ENCODE measurements at regions of chr20 and their contacts with region 1.

Region 1: DNA sequence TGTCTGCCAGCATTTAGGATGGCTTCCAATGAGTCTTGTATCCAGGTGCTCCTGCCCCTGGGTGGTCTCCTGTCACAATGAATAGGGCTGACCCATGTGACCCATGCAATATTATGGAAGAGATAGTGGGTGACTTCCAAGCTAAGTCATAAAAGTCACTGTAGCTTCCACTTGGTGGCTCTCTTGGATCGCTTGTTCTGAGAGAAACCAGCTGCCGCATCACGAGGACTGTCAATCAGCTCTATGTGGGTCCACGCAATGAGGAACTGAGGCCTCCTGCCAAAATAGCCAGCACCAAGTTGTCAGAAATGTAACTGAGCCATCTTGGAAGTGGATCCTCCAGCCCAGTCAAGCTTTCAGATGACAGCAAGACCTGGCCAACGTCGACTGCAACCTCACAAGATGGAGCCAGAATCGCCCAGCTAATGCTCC is 14.9 kb upstream of the MATN4 start:
- DNase-seq: peak; percentile 54
- H3K4me3 Mint-ChIP-seq: no peak overlapping the region
- H3K27ac Mint-ChIP-seq: no peak overlapping the region
- H3K4me1 Mint-ChIP-seq: peaks cover 26% of the 10 kb centered on the region
- H3K27me3 Mint-ChIP-seq: no peaks in the 10 kb centered on the region

Region 2: GRCh38 chr20:44966030-44966961 is 356.7 kb before region 1 on chr20 and contains the start of gene STK4:
- CTCF ChIA-PET with region 1: no interaction called
- intact Hi-C with region 1: no loop called
- DNase-seq: peak; percentile 96
- H3K4me3 Mint-ChIP-seq: peak within 1 kb of the TSS; percentile 88
- H3K27ac Mint-ChIP-seq: peak within 1 kb of the TSS; percentile 98
- H3K4me1 Mint-ChIP-seq: peaks cover 56% of the 10 kb centered on the region
- H3K27me3 Mint-ChIP-seq: no peaks in the 10 kb centered on the region
- total RNA-seq, gene STK4: 110 to 116 TPM

Region 3: DNA sequence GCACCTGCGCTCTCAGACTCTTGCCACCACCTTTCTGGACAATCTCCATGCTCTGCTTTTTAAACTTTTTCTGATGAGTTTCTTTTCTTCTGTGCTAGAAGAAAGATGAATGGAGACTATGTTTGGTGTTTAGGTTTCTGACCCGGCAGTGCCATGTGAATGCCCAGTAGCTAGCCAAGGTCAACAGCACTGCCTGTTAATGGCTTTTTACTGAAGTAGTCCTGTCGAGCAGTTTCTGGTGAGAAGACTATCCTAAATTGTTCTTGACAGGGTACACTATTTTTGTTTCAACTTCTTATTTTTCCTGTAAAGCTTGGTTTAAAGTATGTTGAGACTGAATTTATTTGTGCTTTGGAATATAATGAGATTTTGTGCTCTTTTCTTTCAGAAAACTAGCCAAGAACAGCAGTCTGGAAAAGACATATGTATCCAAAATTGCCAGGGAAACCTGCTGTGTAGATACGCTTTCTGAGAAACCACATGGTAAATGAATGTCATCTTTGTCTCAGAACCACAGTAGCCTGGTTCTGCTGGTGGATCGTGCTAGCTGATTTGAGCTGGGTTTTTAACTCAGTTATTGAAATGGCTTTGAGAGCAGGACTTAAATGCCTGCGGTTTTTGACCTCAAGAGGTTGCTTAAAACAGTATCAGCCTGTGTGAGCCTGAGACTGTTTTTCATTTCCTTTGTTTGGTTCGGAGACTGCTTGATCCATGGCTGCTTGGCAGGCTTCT is 270.1 kb before region 1 on chr20:
- CTCF ChIA-PET with region 1: no interaction called
- intact Hi-C with region 1: no loop called
- DNase-seq: peak; percentile 20
- H3K4me3 Mint-ChIP-seq: no peak overlapping the region
- H3K27ac Mint-ChIP-seq: peak overlapping the region; percentile 80
- H3K4me1 Mint-ChIP-seq: peaks cover 80% of the 10 kb centered on the region
- H3K27me3 Mint-ChIP-seq: no peaks in the 10 kb centered on the region

Region 4: GRCh38 chr20:45347936-45348778 is 25.2 kb after region 1 on chr20 and contains the start of gene SDC4:
- CTCF ChIA-PET with region 1: interaction called, 20 read pairs
- intact Hi-C with region 1: no loop called
- DNase-seq: peak; percentile 68
- H3K4me3 Mint-ChIP-seq: peak within 1 kb of the TSS; percentile 80
- H3K27ac Mint-ChIP-seq: peak within 1 kb of the TSS; percentile 77
- H3K4me1 Mint-ChIP-seq: peaks cover 38% of the 10 kb centered on the region
- H3K27me3 Mint-ChIP-seq: no peaks in the 10 kb centered on the region
- total RNA-seq, gene SDC4: 28.4 to 31.4 TPM

Region 5: DNA sequence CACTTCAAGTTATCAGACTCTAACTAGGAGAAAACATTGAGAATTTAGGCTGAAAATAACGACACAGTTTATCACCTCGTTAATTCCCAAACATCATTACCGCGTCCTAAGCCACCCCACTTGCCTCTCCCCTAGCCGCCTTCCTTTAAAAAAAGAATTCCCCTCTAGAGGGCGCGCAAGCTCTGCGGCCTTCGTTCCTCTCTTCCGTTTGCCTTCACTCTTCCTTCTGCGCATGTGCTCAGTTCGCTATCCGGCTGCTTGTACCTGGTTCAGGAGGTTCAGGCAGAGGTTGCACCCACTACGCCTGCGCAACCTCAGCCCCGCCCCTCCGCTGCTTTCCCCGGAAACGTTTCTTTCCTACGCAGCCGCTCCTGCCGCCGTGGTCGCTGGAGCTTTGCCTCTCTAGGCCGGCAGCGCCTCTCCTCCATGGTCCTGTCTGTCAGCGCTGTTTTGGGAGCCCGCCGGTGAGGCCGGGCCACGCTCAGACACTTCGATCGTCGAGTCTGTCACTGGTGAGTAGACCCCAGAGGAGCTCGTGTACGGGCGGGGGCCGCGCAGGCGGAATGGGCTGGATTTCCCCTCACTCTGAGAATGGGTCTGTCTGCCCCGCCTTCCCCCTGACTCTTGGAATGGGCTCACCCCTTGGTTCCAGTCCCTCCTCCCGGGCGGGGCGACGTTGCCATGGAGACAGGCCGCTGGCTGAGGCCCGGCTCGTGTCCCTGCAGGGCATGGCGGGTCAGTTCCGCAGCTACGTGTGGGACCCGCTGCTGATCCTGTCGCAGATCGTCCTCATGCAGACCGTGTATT is 40.0 kb after region 1 on chr20 and contains the start of gene SYS1:
- CTCF ChIA-PET with region 1: interaction called, 35 read pairs
- intact Hi-C with region 1: loop called (anchors 2 kb)
- DNase-seq: peak; percentile 99
- H3K4me3 Mint-ChIP-seq: peak within 1 kb of the TSS; percentile 96
- H3K27ac Mint-ChIP-seq: peak within 1 kb of the TSS; percentile 97
- H3K4me1 Mint-ChIP-seq: peaks cover 47% of the 10 kb centered on the region
- H3K27me3 Mint-ChIP-seq: no peaks in the 10 kb centered on the region
- total RNA-seq, gene SYS1: 24.0 to 26.0 TPM

Region 6: DNA sequence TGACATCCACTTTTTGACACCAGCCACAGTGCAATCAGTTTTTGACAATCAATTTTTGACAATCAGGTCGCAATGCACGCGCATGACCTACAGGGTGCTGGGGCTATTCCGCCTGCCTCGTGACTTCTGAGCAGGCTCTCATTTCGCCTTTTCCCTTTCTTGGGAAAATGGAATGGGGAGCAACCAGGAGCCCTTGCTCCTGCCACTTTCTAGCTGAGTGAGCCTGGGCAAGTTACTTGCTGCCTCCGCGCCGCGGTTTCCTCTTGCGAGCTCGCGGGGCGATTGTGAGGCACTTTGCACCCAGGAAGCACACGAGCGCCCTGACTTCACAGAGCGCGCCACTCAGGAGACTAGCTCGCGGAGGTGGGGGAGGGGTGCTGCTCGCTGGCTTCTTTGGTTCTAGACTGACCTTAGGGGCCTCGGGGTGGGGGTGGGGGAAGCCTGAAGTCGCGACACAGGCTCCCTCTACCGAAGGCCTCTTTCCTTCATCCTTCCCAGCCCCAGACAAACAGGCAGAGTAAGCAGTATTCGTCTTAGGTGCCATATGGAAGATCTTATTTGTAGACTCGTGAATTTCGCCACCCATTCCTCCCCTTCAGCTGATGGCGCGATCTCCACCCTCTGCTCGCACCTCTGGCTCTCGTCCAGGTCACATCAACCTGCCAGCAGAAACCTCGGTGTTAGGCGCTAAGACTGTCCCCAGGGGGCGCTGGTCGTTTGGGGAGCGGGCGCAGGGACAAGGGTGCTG is 50.6 kb after region 1 on chr20:
- CTCF ChIA-PET with region 1: interaction called, 27 read pairs
- intact Hi-C with region 1: loop called (anchors 1 kb)
- DNase-seq: peak; percentile 96
- H3K4me3 Mint-ChIP-seq: peak overlapping the region; percentile 83
- H3K27ac Mint-ChIP-seq: peak overlapping the region; percentile 89
- H3K4me1 Mint-ChIP-seq: peaks cover 26% of the 10 kb centered on the region
- H3K27me3 Mint-ChIP-seq: no peaks in the 10 kb centered on the region

Region 7: DNA sequence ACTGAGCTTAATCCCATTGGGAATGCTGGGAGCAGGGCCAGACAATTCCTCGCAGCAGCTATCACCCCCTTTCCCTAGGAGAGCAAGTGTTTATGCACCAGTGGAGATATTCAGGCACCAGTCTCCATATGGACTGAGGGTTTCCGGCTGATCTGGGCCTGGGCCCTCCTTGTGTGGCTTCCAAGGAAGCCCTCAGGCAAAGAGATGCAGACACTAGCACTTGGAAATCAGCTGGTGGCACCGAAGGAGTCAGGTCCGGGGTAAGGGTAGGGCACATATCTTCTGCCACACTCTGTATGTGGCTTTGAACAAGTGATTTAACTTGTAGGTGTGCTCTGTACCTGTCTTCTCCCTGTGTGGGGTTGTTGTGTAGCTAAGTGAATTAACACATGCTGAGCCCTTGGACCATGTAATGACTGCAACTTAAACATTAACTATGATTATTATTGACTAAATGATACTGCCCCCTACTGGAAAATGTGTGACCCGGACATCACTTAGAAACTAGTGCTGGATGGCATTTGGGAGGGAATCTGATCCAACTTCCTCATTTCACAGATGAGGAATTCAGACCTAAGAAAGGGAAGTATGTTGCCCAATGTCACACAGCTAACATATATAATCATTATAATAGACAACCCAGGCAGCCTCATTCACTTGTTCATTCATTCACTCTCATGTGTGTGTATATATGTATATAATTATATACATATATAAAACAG is 127.3 kb after region 1 on chr20:
- CTCF ChIA-PET with region 1: interaction called, 12 read pairs
- intact Hi-C with region 1: loop called (anchors 1 kb)
- DNase-seq: peak; percentile 30
- H3K4me3 Mint-ChIP-seq: no peak overlapping the region
- H3K27ac Mint-ChIP-seq: no peak overlapping the region
- H3K4me1 Mint-ChIP-seq: no peaks in the 10 kb centered on the region
- H3K27me3 Mint-ChIP-seq: no peaks in the 10 kb centered on the region